ENCODE measurements at regions of chr5 and their contacts with region 1.

Region 1: DNA sequence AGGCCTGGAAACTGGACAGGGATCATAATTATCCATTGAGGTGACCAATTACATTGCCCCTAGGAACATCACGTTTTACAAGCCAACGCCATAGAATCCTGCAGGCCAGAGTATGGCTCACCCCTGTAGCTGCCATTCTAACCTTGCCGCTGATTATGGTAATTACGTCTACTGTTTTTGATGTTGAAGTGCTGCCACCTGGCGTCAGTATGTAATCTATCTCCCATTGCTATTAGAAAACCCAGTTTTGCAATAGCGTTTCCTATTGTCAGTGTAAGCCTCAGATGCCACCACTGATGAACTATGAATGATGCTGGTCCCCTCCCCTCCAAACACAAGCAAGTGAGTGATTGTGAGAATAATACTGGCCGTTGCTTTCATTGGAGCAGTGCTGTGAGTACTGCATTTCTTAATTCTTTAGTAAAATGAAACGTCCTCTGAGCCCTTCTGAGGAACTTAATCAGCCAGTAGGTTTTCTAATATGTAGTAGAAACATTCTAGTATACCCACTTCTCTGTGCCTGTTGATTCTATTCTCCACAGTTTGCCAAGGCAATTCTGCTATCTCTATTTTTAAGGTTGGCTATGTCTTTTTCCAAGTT is 100.5 kb upstream of the NMUR2 start:
- DNase-seq: peak; percentile 69
- ATAC-seq: peak; percentile 84
- H3K4me3 Mint-ChIP-seq: no peak overlapping the region
- H3K27ac Mint-ChIP-seq: no peak overlapping the region
- H3K4me1 Mint-ChIP-seq: no peaks in the 10 kb centered on the region
- H3K27me3 Mint-ChIP-seq: peaks cover 20% of the 10 kb centered on the region

Region 2: GRCh38 chr5:152142840-152143469 is 362.6 kb before region 1 on chr5:
- CTCF ChIA-PET with region 1: interaction called, 3 read pairs
- POLR2A ChIA-PET with region 1: no interaction called
- intact Hi-C with region 1: loop called in 1 of 2 experiments (anchors 2 kb)
- DNase-seq: peak; percentile 78
- ATAC-seq: peak; percentile 81
- H3K4me3 Mint-ChIP-seq: no peak overlapping the region
- H3K27ac Mint-ChIP-seq: no peak overlapping the region
- H3K4me1 Mint-ChIP-seq: no peaks in the 10 kb centered on the region
- H3K27me3 Mint-ChIP-seq: no peaks in the 10 kb centered on the region

Region 3: GRCh38 chr5:152379331-152379730 is 126.2 kb before region 1 on chr5:
- CTCF ChIA-PET with region 1: interaction called, 3 read pairs
- POLR2A ChIA-PET with region 1: no interaction called
- intact Hi-C with region 1: loop called (anchors 1 to 10 kb)
- DNase-seq: no peak
- ATAC-seq: no peak
- H3K4me3 Mint-ChIP-seq: no peak overlapping the region
- H3K27ac Mint-ChIP-seq: no peak overlapping the region
- H3K4me1 Mint-ChIP-seq: no peaks in the 10 kb centered on the region
- H3K27me3 Mint-ChIP-seq: peaks cover 9% of the 10 kb centered on the region

Region 4: GRCh38 chr5:152389208-152389849 is 116.2 kb before region 1 on chr5:
- CTCF ChIA-PET with region 1: no interaction called
- POLR2A ChIA-PET with region 1: no interaction called
- intact Hi-C with region 1: loop called in 1 of 2 experiments (anchors 10 kb)
- DNase-seq: no peak
- ATAC-seq: no peak
- H3K4me3 Mint-ChIP-seq: no peak overlapping the region
- H3K27ac Mint-ChIP-seq: no peak overlapping the region
- H3K4me1 Mint-ChIP-seq: no peaks in the 10 kb centered on the region
- H3K27me3 Mint-ChIP-seq: no peaks in the 10 kb centered on the region

Region 5: GRCh38 chr5:152607401-152608160 is 102.0 kb after region 1 on chr5:
- CTCF ChIA-PET with region 1: no interaction called
- POLR2A ChIA-PET with region 1: no interaction called
- intact Hi-C with region 1: no loop called
- DNase-seq: no peak
- ATAC-seq: no peak
- H3K4me3 Mint-ChIP-seq: no peak overlapping the region
- H3K27ac Mint-ChIP-seq: no peak overlapping the region
- H3K4me1 Mint-ChIP-seq: no peaks in the 10 kb centered on the region
- H3K27me3 Mint-ChIP-seq: no peaks in the 10 kb centered on the region